ENCODE measurements at regions of chrX and their contacts with region 1.

Region 1: DNA sequence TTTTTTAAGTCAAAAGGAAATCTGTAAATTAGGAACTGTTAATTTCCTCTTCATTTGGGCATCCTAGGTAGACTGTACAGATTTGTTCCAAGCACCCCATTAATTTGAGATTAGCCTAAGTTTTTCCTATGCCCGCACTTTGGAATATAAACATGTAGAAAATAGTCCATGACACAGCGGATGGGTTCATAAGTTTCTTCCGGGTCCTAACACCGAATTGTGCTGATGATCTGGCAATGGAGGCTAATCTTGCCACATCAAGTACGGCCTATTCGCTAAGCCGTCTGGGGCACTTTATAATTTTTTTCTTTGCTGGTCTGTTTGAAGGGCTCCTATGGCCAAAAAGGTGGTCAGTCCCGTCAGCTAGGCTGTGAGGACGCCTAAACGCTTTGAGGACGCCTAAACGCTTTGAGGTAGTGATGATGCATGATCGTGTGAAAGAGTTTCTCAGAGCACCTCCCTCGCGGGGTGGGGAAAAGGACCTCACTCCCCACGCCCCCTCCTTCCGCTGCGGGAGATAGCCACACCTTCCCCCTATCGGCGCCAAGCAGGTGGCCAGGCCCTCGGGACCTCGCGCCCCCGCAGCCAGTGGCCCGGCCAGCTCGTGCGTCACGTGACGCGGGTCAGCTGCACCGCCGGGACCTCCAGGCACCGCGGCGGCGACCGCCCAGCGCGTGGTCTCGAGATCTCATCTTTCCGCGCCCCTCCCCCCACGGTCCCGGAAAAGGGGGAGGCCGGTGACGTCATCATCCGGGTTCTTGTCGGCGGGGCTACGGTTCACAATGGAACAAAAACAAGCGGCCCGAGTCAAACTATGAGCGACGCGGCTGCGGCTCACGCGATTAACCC is 977 bp upstream of the USP9X start:
- DNase-seq: peak; percentile 87

Region 2: DNA sequence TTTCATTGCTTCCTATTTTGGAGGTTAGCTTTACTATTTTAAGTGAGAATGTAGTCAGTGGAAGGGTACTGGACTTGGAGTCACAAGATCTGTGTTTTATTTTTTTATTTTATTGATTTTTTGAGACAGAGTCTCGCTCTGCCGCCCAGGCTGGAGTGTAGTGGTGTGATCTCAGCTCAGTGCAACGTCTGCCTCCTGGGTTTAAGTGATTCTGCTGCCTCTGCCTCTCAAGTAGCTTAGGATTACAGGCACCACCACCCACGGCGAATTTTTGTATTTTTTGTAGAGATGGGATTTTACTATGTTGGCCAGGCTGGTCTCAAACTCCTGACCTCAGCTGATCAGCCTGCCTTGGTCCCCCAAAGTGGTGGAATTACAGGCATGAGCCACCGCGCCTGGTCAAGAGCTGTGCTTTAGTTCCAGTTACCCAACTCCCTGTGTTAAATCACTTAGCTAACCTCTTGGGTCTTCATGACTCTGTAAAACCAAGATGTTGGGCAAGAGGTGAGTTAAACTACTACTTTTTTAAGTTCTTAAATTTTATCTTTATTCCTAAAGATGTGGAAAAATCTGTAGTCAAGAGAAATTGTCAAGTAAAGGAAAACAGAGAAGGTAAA is 12.2 kb after region 1 on chrX:
- CTCF ChIA-PET with region 1: no interaction called
- POLR2A ChIA-PET with region 1: interaction called, 10 read pairs
- DNase-seq: no peak

Region 3: DNA sequence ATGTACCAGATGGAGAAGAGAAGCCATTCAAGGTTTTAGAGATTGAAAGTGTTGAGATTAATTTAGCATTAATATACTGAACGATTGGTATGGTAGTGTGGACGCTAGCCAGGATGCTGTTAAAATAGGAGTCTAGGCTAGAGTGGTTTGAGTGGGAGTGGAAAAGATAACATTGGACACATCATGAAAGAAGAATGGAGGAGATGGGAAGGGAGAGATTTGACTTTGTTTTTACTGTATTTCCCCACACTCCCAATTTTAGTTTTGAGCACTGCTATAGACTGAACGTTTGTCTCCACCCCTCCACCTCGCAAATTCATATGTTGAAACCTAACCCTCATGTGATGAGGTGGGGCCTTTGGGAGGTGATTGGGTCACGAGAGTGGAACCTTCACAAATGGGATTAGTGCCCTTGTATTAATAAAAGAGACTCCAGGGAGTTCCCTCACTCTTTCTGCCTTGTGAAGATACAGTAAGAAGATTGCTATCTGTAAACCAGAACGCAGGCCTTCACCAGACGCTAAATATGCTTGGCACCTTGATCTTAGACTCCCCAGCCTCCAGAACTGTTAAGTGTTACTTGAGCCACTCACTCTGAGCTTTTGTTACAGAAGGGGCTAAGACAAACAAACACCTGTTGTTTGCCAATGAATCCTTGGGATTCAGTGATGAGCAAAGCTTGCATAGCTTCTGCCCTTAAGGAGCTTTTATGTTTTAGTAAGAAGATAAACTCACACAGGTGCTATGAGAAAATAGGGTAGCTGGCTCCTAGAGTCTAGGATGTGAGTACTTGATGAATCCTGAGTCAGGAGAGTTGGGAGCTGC is 26.7 kb after region 1 on chrX:
- CTCF ChIA-PET with region 1: interaction called, 6 read pairs
- POLR2A ChIA-PET with region 1: interaction called, 17 read pairs
- DNase-seq: no peak

Region 4: DNA sequence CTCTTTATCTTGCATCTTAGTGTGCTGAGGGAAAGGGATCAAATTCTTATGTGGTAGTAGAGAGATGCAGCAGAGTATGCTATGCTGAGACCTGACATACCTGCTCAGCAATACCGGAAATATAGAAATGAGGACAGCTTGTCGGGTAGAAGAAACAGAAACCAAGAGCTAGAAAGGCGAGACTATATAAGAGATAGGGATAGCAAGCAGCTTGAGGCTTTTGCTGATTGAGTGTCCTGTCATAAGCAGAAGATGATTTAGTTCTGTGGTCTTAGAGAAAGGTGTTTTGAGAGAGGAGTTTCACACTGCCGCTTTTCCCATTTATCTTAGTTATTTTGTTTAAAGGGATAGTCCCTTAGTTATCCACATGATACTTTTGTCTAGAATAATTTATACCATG is 32.7 kb after region 1 on chrX:
- CTCF ChIA-PET with region 1: interaction called, 6 read pairs
- POLR2A ChIA-PET with region 1: interaction called, 17 read pairs
- DNase-seq: no peak

Measured in HEK293T (cell line).